Stomach (tissue), 19 donors: ENCODE measurements at regions of chr9 and their contacts with region 1.

Region 1: DNA sequence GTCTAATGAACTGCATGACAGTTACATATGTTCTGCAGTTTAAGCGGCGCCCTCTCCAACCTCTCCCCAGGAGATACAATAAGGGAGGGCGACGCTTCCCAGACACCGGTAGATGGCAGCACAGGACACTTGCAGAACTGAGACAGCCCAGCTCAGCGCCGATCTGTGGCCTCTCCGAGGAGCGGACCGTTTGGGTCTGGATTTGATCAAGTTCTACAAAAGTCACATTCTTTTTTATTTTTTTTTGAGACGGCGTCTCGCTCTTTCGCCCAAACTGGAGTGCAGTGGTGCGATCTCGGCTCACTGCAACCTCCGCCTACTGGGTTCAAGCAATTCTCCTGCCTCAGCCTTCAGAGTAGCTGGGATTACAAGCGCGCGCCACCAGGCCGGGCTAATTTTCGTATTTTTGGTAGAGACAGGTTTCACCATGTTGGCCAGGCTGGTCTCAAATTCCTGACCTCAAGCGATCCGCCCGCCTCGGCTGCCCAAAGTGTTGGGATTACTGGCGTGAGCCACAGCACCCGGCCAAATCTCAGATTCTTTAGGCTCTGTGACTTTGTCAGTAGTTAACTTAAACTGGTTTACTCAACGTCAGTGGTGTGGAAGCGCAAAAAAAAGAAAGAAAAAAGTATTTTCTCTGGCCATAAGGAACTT is 1.4 kb upstream of the ATOSB start:
- DNase-seq: peak; percentile 92 to 98
- H3K4me3 ChIP-seq: peak overlapping the region; percentile 53 to 65 (median 60)
- H3K27ac ChIP-seq: peak overlapping the region; percentile 87 to 95 (median 92)
- H3K4me1 ChIP-seq: peaks cover 31 to 49% (median 49%) of the 10 kb centered on the region in 4 donors
- H3K27me3 ChIP-seq: no peaks in the 10 kb centered on the region
- CTCF ChIP-seq: peak in 5 of 7 experiments; percentile 83 to 92 (median 89)
- EP300 ChIP-seq: no peak
- POLR2A ChIP-seq: no peak

Region 2: GRCh38 chr9:35258676-35259474 is 141.8 kb after region 1 on chr9:
- intact Hi-C with region 1: loop called (anchors 5 kb)
- DNase-seq: peak; percentile 75 to 90
- H3K4me3 ChIP-seq: no peak overlapping the region
- H3K27ac ChIP-seq: peak overlapping the region; percentile 44 to 63 (median 58)
- H3K4me1 ChIP-seq: peaks cover 7 to 17% (median 13%) of the 10 kb centered on the region in 4 donors
- H3K27me3 ChIP-seq: no peaks in the 10 kb centered on the region
- CTCF ChIP-seq: peak in 5 of 7 experiments; percentile 38 to 72 (median 58)
- EP300 ChIP-seq: no peak
- POLR2A ChIP-seq: no peak

Region 3: DNA sequence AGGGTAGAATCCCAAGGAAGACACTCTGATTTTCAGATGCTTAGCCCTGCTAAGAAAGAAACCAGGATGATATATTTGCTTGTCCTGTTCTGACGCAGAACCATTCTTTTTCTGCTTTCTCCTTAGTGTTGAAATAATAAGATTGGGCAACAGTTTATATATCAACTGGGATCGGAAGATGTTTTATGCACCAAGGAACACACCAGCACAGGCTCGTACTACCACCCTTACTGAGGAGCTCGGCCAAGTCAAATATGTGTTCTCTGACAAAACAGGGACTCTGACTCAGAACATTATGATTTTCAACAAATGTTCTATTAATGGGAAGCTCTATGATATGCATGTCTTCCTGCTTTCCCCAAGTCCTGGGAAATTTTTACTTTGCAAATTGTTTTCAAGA is 353.9 kb after region 1 on chr9:
- intact Hi-C with region 1: loop called (anchors 10 kb)
- DNase-seq: peak in 1 of 2 donors; percentile 39
- H3K4me3 ChIP-seq: no peak overlapping the region
- H3K27ac ChIP-seq: peak overlapping the region in 2 of 5 donors; percentile 63 to 69
- H3K4me1 ChIP-seq: peaks cover 0 to 17% (median 4%) of the 10 kb centered on the region in 4 donors
- H3K27me3 ChIP-seq: no peaks in the 10 kb centered on the region
- CTCF ChIP-seq: no peak
- EP300 ChIP-seq: no peak
- POLR2A ChIP-seq: no peak